Activated naive CD4-positive, alpha-beta T cell treated with anti-CD3 and anti-CD28 coated beads for 36 hours (primary cell): ENCODE measurements at regions of chr1 and their contacts with region 1.

Region 1: DNA sequence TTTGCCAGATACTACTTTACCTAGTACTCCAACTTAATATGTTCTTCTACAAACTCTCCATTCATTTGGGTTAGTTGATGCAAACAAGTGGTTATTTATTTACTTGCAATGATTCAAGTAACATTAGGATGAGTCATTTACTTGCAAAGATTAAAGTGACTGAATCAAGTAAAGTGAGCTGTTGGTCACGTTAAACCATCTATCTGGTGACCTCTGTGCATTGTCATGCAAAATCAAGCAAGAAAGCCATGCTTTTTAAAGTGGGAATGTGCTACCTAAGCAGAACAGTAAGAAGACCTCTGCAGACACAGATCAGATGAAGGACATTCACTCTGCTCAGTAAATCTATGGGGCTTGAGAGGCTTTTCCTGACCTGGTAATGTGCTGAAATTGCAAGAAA is 254.7 kb downstream of the LRRIQ3 start:
- DNase-seq: no peak
- H3K4me3 Mint-ChIP-seq: no peak overlapping the region
- H3K27ac Mint-ChIP-seq: no peak overlapping the region
- H3K4me1 Mint-ChIP-seq: no peaks in the 10 kb centered on the region
- H3K27me3 Mint-ChIP-seq: no peaks in the 10 kb centered on the region

Region 2: DNA sequence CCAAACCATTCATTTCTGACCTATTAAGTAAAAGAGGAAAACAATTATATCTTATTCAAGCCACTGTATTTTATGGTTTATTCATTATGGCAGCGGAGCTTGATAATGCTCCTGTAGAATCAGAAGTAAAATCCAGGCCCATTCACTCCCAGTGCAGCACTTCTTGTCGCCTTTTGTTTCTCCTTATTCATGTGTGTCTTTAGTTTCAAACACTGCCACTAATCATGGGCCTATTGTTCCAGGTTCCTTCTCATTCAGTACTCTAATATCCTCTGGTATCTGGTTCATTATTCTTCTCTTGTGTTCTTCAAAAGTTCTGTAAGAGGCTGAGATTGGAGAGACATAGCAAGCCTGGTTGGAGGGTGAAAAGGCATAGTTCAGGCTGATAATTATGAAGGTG is 36.4 kb after region 1 on chr1:
- CTCF ChIA-PET with region 1: no interaction called
- intact Hi-C with region 1: loop called (anchors 1 kb)
- DNase-seq: no peak
- H3K4me3 Mint-ChIP-seq: no peak overlapping the region
- H3K27ac Mint-ChIP-seq: no peak overlapping the region
- H3K4me1 Mint-ChIP-seq: no peaks in the 10 kb centered on the region
- H3K27me3 Mint-ChIP-seq: no peaks in the 10 kb centered on the region